Transverse colon (tissue), 4 donors: ENCODE measurements at regions of chr1 and their contacts with region 1.

Region 1: GRCh38 chr1:11805447-11806306 is at the starts of genes CLCN6 and MTHFR:
- DNase-seq: peak; percentile 100
- H3K4me3 ChIP-seq: peak within 1 kb of the TSS; percentile 67 to 80 (median 75)
- H3K27ac ChIP-seq: peak within 1 kb of the TSS; percentile 94 to 98 (median 96)
- H3K4me1 ChIP-seq: peaks cover 23 to 58% (median 39%) of the 10 kb centered on the region in 4 donors
- H3K27me3 ChIP-seq: no peaks in the 10 kb centered on the region
- CTCF ChIP-seq: no peak
- EP300 ChIP-seq: peak; percentile 46
- POLR2A ChIP-seq: peak; percentile 98
- total RNA-seq, gene CLCN6: 14.0 to 184 (median 30.7) TPM
- total RNA-seq, gene MTHFR: 42.8 to 141 (median 48.3) TPM

Region 2: GRCh38 chr1:11735854-11736745 is 69.6 kb before region 1 on chr1 and contains the start of gene AGTRAP:
- in situ Hi-C with region 1: no loop called
- intact Hi-C with region 1: loop called (anchors 10 kb)
- DNase-seq: peak; percentile 96
- H3K4me3 ChIP-seq: peak within 1 kb of the TSS; percentile 67 to 82 (median 78)
- H3K27ac ChIP-seq: peak within 1 kb of the TSS; percentile 77 to 90 (median 84)
- H3K4me1 ChIP-seq: peaks cover 6 to 39% (median 24%) of the 10 kb centered on the region in 4 donors
- H3K27me3 ChIP-seq: no peaks in the 10 kb centered on the region
- CTCF ChIP-seq: peak in 2 of 5 experiments; percentile 9 to 11
- EP300 ChIP-seq: no peak
- POLR2A ChIP-seq: no peak
- total RNA-seq, gene AGTRAP: 1.2 to 27.0 (median 22.7) TPM